ENCODE measurements at regions of chr15 and their contacts with region 1.

Region 1: DNA sequence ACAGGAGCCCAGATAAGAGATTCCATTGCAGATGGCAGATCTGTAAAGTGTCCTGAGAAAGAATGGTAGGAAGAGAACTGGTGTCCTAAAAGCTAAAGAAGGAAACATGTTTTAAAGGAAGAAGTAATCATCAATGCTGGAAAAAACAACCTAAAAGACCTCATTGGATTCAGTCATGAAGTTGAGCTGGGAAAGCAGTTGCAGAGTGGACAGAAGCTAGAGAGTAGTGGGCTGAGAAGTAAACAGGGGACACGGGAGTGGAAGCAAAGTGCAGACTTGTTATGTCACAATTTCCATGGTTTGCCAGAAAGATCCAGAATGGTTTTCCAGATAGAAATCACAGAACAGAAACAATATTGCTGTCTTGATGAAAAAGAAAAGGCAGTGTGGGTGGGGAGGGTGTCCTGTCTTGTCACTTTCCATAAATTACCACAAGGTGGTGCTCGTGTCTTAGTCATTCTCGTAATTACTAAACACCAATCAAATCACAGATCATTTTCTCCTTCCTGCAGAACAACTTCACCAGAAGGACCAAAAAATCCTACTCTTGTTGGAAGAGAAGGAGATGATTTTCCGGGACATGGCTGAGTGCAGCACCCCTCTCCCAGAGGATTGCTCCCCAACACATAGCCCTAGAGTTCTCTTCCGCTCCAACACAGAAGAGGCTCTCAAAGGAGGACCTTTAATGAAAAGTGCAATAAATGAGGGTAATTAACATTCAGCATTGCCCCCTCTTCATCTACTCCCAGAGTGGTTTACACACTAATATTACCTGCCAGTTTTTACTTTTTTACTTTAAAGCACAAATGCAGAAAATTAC is 64.5 kb downstream of the KLHL25 start:
- DNase-seq: peak; percentile 67
- ATAC-seq: peak; percentile 80
- H3K4me3 Mint-ChIP-seq: no peak overlapping the region
- H3K27ac Mint-ChIP-seq: peak overlapping the region; percentile 54
- H3K4me1 Mint-ChIP-seq: peaks cover 8% of the 10 kb centered on the region
- H3K27me3 Mint-ChIP-seq: no peaks in the 10 kb centered on the region

Region 2: DNA sequence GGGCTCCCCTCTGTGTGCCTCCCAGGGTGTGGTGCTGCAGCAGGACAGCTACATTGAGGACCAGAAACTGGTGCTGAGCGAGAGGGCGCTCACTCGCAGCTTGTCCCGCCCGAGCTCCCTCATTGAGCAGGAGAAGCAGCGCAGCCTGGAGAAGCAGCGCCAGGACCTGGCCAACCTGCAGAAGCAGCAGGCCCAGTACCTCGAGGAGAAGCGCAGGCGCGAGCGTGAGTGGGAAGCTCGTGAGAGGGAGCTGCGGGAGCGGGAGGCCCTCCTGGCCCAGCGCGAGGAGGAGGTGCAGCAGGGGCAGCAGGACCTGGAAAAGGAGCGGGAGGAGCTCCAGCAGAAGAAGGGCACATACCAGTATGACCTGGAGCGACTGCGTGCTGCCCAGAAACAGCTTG is 10.8 kb after region 1 on chr15:
- CTCF ChIA-PET with region 1: interaction called, 18 read pairs
- POLR2A ChIA-PET with region 1: no interaction called
- DNase-seq: no peak
- ATAC-seq: no peak
- H3K4me3 Mint-ChIP-seq: no peak overlapping the region
- H3K27ac Mint-ChIP-seq: no peak overlapping the region
- H3K4me1 Mint-ChIP-seq: no peaks in the 10 kb centered on the region
- H3K27me3 Mint-ChIP-seq: no peaks in the 10 kb centered on the region